Activated CD4-positive, alpha-beta memory T cell treated with anti-CD3 and anti-CD28 coated beads for 36 hours (primary cell): ENCODE measurements at regions of chr3 and their contacts with region 1.

Region 1: DNA sequence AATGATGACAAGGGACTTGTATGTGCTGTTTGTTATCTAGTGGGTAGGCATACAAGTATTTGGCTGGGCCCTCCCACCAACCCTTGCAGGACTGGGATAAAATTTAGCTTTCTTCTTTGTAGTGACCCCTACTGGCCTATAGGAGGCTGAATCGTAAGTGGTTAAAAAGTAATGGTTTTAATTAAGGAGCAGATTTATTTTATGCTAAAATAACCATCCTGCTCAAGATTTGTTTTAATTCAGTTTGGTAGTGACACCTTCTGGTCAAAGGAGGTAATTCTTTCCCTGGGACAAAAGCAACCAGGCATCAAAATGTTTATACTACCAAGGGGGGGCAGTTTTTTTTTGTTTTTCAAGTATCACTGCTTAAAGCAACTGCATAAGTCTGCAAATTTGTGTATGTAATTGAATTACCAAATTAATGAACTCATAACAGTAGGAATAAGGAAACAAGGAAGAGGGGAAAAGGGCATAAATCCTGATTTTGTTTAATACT is 70.7 kb downstream of the TOP2B start:
- DNase-seq: no peak
- H3K4me3 Mint-ChIP-seq: no peak overlapping the region
- H3K27ac Mint-ChIP-seq: no peak overlapping the region
- H3K4me1 Mint-ChIP-seq: no peaks in the 10 kb centered on the region
- H3K27me3 Mint-ChIP-seq: no peaks in the 10 kb centered on the region

Region 2: DNA sequence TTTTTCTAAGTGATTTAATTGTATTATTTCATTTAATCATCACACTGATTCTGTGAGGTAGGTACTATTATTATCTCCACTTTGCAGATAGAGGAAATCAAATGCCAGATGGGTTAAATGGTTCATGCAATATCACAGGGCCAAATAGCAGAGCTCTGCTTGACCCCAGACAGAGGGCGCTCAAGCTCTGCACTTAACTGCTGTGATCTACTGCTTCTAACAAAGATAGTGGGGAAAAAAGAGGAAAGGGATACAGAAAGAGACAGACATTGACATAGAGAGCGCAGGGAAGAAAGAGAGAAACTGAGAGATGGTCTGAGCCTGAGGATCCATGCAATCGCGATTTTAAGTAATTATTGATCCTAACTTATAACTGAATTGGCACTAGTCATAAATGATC is 820.3 kb before region 1 on chr3:
- CTCF ChIA-PET with region 1: no interaction called
- POLR2A ChIA-PET with region 1: no interaction called
- intact Hi-C with region 1: loop called (anchors 5 kb)
- DNase-seq: peak; percentile 20
- H3K4me3 Mint-ChIP-seq: no peak overlapping the region
- H3K27ac Mint-ChIP-seq: no peak overlapping the region
- H3K4me1 Mint-ChIP-seq: no peaks in the 10 kb centered on the region
- H3K27me3 Mint-ChIP-seq: no peaks in the 10 kb centered on the region

Region 3: GRCh38 chr3:25433868-25434267 is 160.2 kb before region 1 on chr3:
- CTCF ChIA-PET with region 1: interaction called, 4 read pairs
- POLR2A ChIA-PET with region 1: no interaction called
- intact Hi-C with region 1: loop called (anchors 10 kb)
- DNase-seq: no peak
- H3K4me3 Mint-ChIP-seq: no peak overlapping the region
- H3K27ac Mint-ChIP-seq: no peak overlapping the region
- H3K4me1 Mint-ChIP-seq: no peaks in the 10 kb centered on the region
- H3K27me3 Mint-ChIP-seq: peaks cover 14% of the 10 kb centered on the region

Region 4: DNA sequence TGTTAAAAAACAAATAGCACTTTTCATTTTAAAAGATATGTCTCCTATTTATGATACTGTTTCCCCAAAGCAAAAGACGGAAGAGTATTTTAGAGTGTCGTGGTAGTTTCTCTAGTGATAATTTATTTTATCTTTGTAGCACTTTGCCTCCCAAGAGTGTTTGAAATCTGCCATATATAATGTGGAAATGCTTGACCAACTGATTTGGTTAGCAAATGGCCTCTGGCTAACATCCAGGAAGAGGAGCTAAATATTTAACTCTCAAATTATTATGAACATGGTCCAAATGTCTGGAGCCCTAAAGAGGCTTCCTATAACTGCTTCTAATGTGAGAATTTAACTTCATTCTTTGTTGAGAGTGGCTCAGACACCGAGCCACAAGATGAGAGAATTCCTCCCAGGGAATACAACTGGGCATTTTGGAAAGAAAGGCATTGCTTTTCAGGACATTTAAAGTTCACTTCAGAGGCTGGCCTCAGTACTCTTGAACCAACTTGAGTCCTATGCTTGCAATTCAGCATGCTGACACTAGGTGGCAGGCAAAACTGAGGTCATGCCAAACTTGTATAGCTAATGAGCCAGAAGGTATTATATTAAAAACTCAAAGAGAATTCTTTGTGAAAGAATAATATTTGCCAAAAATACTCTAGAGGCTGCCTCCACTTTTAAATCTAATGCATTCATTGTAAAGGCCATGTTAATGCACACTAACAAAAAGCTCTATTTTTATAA is 61.5 kb before region 1 on chr3:
- CTCF ChIA-PET with region 1: interaction called, 15 read pairs
- POLR2A ChIA-PET with region 1: no interaction called
- intact Hi-C with region 1: loop called (anchors 1 kb)
- DNase-seq: peak; percentile 45
- H3K4me3 Mint-ChIP-seq: no peak overlapping the region
- H3K27ac Mint-ChIP-seq: no peak overlapping the region
- H3K4me1 Mint-ChIP-seq: no peaks in the 10 kb centered on the region
- H3K27me3 Mint-ChIP-seq: peaks cover 2% of the 10 kb centered on the region

Region 5: GRCh38 chr3:25723802-25724201 is 129.7 kb after region 1 on chr3:
- CTCF ChIA-PET with region 1: no interaction called
- POLR2A ChIA-PET with region 1: no interaction called
- intact Hi-C with region 1: no loop called
- DNase-seq: no peak
- H3K4me3 Mint-ChIP-seq: no peak overlapping the region
- H3K27ac Mint-ChIP-seq: no peak overlapping the region
- H3K4me1 Mint-ChIP-seq: no peaks in the 10 kb centered on the region
- H3K27me3 Mint-ChIP-seq: no peaks in the 10 kb centered on the region